Activated CD4-positive, alpha-beta memory T cell treated with anti-CD3 and anti-CD28 coated beads, Interleukin-2, amount 10 ng/mL, durations not matched to agents 7 days and 5 days (primary cell): ENCODE measurements at regions of chr12 and their contacts with region 1.

Region 1: DNA sequence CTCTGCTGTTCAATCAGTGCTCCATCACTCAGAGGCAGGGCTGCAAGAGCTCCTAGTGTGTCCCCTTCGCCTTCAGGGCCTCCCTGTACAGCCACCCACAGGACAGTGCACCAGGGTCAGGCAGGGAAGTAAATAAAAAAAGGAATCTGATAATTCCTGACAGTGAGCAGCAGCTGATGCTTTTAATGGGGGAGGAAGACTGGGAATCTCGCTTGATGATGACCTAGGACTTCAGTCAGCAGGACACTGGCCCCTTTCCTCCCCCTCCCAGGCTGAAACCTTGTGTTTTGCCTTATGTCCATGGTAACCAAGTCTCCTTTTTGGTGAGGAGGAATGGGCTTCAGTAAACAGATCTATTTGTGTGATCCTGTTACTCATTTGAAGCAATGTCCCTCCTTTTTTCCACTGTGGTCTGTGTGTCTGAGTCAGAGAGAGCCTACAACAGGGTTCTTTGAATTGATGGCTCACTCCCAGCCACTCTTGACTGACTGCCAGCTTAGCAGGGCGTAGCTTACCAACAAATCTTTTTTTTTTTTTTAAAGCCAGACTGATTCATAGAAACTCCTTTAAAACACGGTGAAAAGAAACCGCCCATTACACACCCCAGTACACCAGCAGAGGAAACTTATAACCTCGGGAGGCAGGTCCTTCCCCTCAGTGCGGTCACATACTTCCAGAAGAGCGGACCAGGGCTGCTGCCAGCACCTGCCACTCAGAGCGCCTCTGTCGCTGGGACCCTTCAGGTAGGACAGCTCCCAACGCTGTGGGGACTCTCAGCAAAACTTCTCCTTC is at the start of gene EMP1:
- DNase-seq: peak; percentile 83
- H3K4me3 Mint-ChIP-seq: peak within 1 kb of the TSS; percentile 78
- H3K27ac Mint-ChIP-seq: peak within 1 kb of the TSS; percentile 79
- H3K4me1 Mint-ChIP-seq: peaks cover 69% of the 10 kb centered on the region
- H3K27me3 Mint-ChIP-seq: peaks cover 6% of the 10 kb centered on the region
- total RNA-seq, gene EMP1: 90.4 to 101 TPM

Region 2: DNA sequence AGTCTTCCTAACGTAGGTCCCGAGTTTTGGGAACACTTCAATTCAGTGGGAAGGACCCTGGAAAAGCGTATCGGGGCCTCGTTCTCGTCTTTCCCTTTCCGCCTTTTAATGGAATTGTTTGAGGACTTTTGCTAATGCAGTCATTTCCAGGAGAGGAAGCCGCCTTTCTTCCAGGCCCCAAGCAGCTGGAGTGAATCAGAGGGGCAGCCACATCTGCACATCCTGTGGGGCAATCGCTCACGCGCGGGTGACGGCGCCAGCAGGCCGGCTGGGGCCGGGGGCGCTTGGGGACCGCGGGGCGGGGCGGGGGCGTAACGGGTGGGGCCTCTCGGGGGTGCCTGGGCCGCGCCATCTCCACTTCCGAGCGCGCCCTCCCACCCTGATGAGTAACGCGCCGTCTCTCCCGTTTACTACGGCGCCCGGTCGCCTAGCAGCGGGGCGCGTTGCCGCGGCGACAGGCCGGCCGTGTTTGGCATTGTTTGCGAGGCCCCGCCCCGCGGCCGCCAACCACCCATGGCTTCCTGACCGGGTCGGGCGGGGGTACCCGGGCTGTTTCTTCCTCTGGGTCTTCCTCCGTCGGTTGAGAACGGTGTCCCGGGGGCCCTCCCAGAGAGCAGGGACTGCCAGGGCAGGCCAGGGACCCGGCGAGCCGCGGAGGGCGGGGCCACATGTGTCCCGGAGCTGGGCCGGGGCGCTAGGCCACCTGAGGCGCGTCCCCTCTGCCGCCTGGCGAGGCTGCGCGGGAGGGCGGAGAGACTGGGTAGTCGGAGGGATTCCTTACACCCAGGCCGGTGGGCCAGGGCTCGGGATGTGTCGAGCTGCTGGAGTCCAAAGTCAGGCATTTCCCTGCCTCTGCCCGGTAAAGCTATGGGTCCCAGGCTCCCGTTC is 95.2 kb before region 1 on chr12:
- CTCF ChIA-PET with region 1: no interaction called
- POLR2A ChIA-PET with region 1: interaction called, 21 read pairs
- DNase-seq: peak; percentile 94
- H3K4me3 Mint-ChIP-seq: peak overlapping the region; percentile 71
- H3K27ac Mint-ChIP-seq: peak overlapping the region; percentile 75
- H3K4me1 Mint-ChIP-seq: peaks cover 59% of the 10 kb centered on the region
- H3K27me3 Mint-ChIP-seq: no peaks in the 10 kb centered on the region

Region 3: GRCh38 chr12:13165617-13166041 is 30.7 kb before region 1 on chr12:
- CTCF ChIA-PET with region 1: interaction called, 9 read pairs
- POLR2A ChIA-PET with region 1: interaction called, 12 read pairs
- DNase-seq: peak; percentile 87
- H3K4me3 Mint-ChIP-seq: no peak overlapping the region
- H3K27ac Mint-ChIP-seq: peak overlapping the region; percentile 80
- H3K4me1 Mint-ChIP-seq: peaks cover 26% of the 10 kb centered on the region
- H3K27me3 Mint-ChIP-seq: peaks cover 17% of the 10 kb centered on the region

Region 4: GRCh38 chr12:13179211-13180074 is 16.9 kb before region 1 on chr12:
- CTCF ChIA-PET with region 1: interaction called, 10 read pairs
- POLR2A ChIA-PET with region 1: interaction called, 30 read pairs
- DNase-seq: peak; percentile 81
- H3K4me3 Mint-ChIP-seq: peak overlapping the region; percentile 62
- H3K27ac Mint-ChIP-seq: peak overlapping the region; percentile 89
- H3K4me1 Mint-ChIP-seq: peaks cover 68% of the 10 kb centered on the region
- H3K27me3 Mint-ChIP-seq: peaks cover 32% of the 10 kb centered on the region

Region 5: GRCh38 chr12:13278249-13278787 is 82.0 kb after region 1 on chr12:
- CTCF ChIA-PET with region 1: no interaction called
- POLR2A ChIA-PET with region 1: no interaction called
- DNase-seq: peak; percentile 54
- H3K4me3 Mint-ChIP-seq: no peak overlapping the region
- H3K27ac Mint-ChIP-seq: no peak overlapping the region
- H3K4me1 Mint-ChIP-seq: peaks cover 4% of the 10 kb centered on the region
- H3K27me3 Mint-ChIP-seq: peaks cover 35% of the 10 kb centered on the region